PC-3 (cell line): ENCODE measurements at regions of chr5 and their contacts with region 1.

Region 1: GRCh38 chr5:111092062-111092853 is at the start of gene WDR36:
- DNase-seq: peak; percentile 93
- ATAC-seq: peak; percentile 89
- H3K4me3 ChIP-seq: peak within 1 kb of the TSS; percentile 95
- H3K27ac ChIP-seq: peak within 1 kb of the TSS; percentile 65
- H3K4me1 ChIP-seq: peaks cover 16% of the 10 kb centered on the region
- H3K27me3 ChIP-seq: no peaks in the 10 kb centered on the region
- CTCF ChIP-seq: no peak
- total RNA-seq, gene WDR36: 38.2 and 44.7 TPM in 2 replicates

Region 2: DNA sequence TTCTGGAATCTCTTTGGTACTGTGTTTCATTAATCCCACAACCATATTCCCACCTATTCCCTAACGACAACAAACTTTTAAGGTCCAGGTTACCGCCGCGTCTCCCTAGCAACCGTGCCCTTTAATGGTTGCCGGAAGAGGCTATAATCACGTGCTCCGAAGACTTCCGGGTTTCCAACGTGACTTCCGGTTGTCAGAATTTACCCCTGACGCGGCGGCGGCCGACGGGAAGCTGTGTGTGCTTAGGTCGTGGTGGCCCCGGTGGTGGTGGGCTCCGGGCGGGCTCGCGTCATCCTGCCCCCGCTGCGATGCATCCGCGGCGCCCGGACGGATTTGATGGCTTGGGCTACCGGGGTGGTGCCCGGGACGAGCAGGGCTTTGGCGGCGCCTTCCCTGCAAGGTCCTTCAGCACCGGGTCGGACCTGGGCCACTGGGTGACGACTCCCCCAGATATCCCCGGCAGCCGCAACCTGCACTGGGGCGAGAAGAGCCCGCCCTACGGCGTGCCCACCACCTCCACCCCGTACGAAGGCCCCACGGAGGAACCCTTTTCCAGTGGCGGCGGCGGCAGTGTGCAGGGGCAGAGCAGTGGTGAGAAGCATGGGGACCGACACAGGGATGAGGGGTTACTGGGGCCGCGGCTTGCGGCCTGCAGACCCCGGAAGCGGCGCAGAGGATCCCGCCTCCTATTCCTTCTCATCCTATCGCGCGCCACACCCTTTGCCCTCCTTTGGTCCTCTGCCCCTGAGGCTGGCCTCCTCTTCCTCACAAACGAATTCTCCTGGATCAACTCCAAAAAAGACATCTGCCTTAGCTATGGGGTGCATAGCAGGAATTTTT is 353.2 kb before region 1 on chr5 and contains the start of gene SLC25A46:
- CTCF ChIA-PET with region 1: no interaction called
- POLR2A ChIA-PET with region 1: no interaction called
- intact Hi-C with region 1: loop called (anchors 1 kb)
- DNase-seq: peak; percentile 82
- ATAC-seq: peak; percentile 88
- H3K4me3 ChIP-seq: peak within 1 kb of the TSS; percentile 97
- H3K27ac ChIP-seq: peak within 1 kb of the TSS; percentile 43
- H3K4me1 ChIP-seq: peaks cover 11% of the 10 kb centered on the region; the same call in 1 of the 2 replicates
- H3K27me3 ChIP-seq: no peaks in the 10 kb centered on the region
- CTCF ChIP-seq: no peak
- total RNA-seq, gene SLC25A46: 31.4 and 42.1 TPM in 2 replicates

Region 3: GRCh38 chr5:111472579-111472978 is 380.3 kb after region 1 on chr5:
- CTCF ChIA-PET with region 1: no interaction called
- POLR2A ChIA-PET with region 1: no interaction called
- intact Hi-C with region 1: no loop called
- DNase-seq: no peak
- ATAC-seq: no peak
- H3K4me3 ChIP-seq: no peak overlapping the region
- H3K27ac ChIP-seq: no peak overlapping the region
- H3K4me1 ChIP-seq: no peaks in the 10 kb centered on the region
- H3K27me3 ChIP-seq: peaks cover 9% of the 10 kb centered on the region
- CTCF ChIP-seq: no peak